ENCODE measurements at regions of chr2 and their contacts with region 1.

Region 1: DNA sequence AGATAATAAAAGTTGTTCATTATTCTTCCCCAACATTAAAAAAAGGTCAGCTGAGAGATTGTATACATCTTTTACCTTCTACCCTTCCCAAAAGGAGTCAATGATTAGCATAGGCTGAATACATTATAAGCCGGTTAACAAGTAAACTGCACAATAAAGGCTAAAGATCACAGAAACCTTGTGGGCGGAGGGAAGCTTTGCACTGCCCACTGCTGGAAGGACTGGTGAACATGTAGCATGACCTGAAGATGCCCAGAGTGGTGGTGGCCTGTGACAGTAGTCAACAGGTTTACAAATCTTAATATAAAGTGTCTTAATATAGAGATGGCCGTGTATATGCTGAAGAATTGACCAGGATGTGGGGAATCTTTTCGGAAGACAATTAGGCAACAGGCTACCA is 35.6 kb downstream of the ARL5A start:
- DNase-seq: no peak
- H3K4me3 ChIP-seq: no peak overlapping the region
- H3K4me3 Mint-ChIP-seq: no peak overlapping the region
- H3K27ac Mint-ChIP-seq: no peak overlapping the region
- H3K4me1 ChIP-seq: no peaks in the 10 kb centered on the region
- H3K4me1 Mint-ChIP-seq: no peaks in the 10 kb centered on the region
- H3K27me3 ChIP-seq: no peaks in the 10 kb centered on the region
- H3K27me3 Mint-ChIP-seq: no peaks in the 10 kb centered on the region
- CTCF ChIP-seq: peak in 1 of 2 experiments; percentile 35

Region 2: GRCh38 chr2:151728804-151729414 is 63.7 kb before region 1 on chr2:
- CTCF ChIA-PET with region 1: no interaction called
- POLR2A ChIA-PET with region 1: no interaction called
- intact Hi-C with region 1: loop called (anchors 2 kb)
- DNase-seq: no peak
- H3K4me3 ChIP-seq: no peak overlapping the region
- H3K4me3 Mint-ChIP-seq: no peak overlapping the region
- H3K27ac Mint-ChIP-seq: no peak overlapping the region
- H3K4me1 ChIP-seq: no peaks in the 10 kb centered on the region
- H3K4me1 Mint-ChIP-seq: no peaks in the 10 kb centered on the region
- H3K27me3 ChIP-seq: no peaks in the 10 kb centered on the region
- H3K27me3 Mint-ChIP-seq: no peaks in the 10 kb centered on the region
- CTCF ChIP-seq: peak; percentile 14 to 33